ENCODE measurements at regions of chr15 and their contacts with region 1.

Region 1: GRCh38 chr15:28969511-28970085 is 83.8 kb downstream of the APBA2 start:
- DNase-seq: peak; percentile 51 to 96 (median 78)

Region 2: DNA sequence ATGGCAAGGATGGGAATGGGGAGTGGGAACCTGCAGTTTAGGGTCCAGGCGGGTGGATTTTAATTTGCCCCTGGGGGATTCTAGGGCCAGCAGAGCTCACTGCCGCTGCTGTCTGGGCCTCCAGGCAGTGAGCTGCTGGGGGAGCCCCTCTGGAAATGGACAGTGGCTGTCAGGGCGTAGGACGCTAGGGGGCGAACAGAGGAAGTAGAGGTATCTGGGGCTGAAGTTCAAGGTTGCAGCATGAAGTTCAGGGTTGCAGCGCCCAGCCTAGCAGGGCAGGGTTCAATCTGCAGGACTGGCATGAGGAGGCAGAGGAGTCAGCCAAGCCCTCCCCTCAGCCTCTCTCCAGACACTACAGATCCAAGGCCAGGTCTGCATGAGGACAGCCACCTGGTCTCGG is 34.3 kb before region 1 on chr15:
- intact Hi-C with region 1: loop called (anchors 5 kb)
- DNase-seq: peak in 4 of 10 donors; percentile 42 to 81 (median 76)

Region 3: GRCh38 chr15:29070449-29071231 is 101.0 kb after region 1 on chr15:
- intact Hi-C with region 1: no loop called
- DNase-seq: peak in 2 of 10 donors; percentile 60 to 90